B cell (primary cell): ENCODE measurements at regions of chr20 and their contacts with region 1.

Region 1: GRCh38 chr20:24992487-24993205 is at the start of gene APMAP:
- DNase-seq: peak; percentile 97
- ATAC-seq: peak; percentile 91
- H3K4me3 ChIP-seq: peak within 1 kb of the TSS; percentile 73 to 96 (median 84)
- H3K4me3 Mint-ChIP-seq: peak within 1 kb of the TSS; percentile 96
- H3K27ac ChIP-seq: peak within 1 kb of the TSS; percentile 93 to 98
- H3K27ac Mint-ChIP-seq: peak within 1 kb of the TSS; percentile 97
- H3K4me1 ChIP-seq: peaks cover 15 to 29% of the 10 kb centered on the region in 2 donors
- H3K4me1 Mint-ChIP-seq: peaks cover 46% of the 10 kb centered on the region
- H3K27me3 ChIP-seq: no peaks in the 10 kb centered on the region
- H3K27me3 Mint-ChIP-seq: no peaks in the 10 kb centered on the region
- CTCF ChIP-seq: no peak
- total RNA-seq, gene APMAP: 28.0 and 28.2 TPM in 2 replicates

Region 2: GRCh38 chr20:24891546-24892393 is 100.9 kb before region 1 on chr20:
- CTCF ChIA-PET with region 1: no interaction called
- POLR2A ChIA-PET with region 1: no interaction called
- intact Hi-C with region 1: no loop called
- DNase-seq: no peak
- ATAC-seq: no peak
- H3K4me3 ChIP-seq: no peak overlapping the region
- H3K4me3 Mint-ChIP-seq: no peak overlapping the region
- H3K27ac ChIP-seq: no peak overlapping the region
- H3K27ac Mint-ChIP-seq: no peak overlapping the region
- H3K4me1 ChIP-seq: no peaks in the 10 kb centered on the region
- H3K4me1 Mint-ChIP-seq: no peaks in the 10 kb centered on the region
- H3K27me3 ChIP-seq: no peaks in the 10 kb centered on the region
- H3K27me3 Mint-ChIP-seq: peaks cover 4% of the 10 kb centered on the region
- CTCF ChIP-seq: no peak

Region 3: DNA sequence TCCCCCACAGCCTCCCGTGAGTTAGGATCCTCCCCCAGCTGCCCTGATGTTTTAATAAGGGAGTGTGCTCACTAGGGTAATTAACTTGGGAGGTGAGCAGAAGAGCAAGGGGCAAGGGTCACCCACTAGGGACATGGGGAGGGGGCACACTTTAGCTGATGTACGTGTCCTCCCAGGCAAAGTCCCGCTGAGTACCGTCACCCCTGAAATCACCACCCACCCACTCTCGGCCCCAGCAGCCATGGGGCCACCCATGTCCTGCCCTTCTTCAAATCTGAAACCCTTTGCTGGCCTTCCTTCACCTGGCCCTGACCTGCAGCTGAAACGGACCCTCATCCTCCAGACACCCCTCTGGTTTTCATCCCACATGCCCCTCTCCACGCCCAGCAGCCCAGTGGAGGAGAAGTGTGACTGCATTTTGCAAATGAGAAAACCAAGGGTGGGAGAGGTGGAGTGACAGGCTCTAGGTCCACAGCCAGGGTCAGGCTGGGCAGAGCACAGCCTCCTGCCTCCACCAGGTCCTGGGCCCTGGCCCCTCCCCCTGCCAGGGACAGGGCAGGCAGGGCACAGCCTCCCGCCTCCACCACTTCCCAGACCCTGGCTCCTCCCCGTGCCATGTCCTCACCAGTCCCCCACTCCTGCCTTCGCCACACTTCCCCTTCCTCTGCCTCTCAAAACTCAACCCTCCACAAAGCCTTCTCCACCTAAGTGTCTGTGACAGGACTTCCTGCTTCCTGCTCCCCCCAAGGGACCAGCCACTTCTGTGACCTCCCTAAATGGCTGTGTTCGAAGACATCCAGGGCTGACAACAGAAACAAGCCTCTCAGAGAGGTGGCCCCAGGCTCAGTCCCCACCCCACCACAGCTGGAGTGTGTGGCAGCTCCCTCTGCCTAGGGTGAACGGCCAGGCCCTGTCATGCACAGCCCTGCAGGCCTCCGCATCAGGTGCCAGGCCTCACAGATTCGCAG is 50.2 kb after region 1 on chr20:
- CTCF ChIA-PET with region 1: interaction called, 5 read pairs
- POLR2A ChIA-PET with region 1: no interaction called
- intact Hi-C with region 1: loop called (anchors 1 kb)
- DNase-seq: peak; percentile 85
- ATAC-seq: peak; percentile 90
- H3K4me3 ChIP-seq: peak overlapping the region in 4 of 5 experiments; percentile 5 to 25 (median 18)
- H3K4me3 Mint-ChIP-seq: peak overlapping the region; percentile 72
- H3K27ac ChIP-seq: peak overlapping the region; percentile 92 to 93
- H3K27ac Mint-ChIP-seq: peak overlapping the region; percentile 90
- H3K4me1 ChIP-seq: peaks cover 58 to 62% of the 10 kb centered on the region in 2 donors
- H3K4me1 Mint-ChIP-seq: peaks cover 63% of the 10 kb centered on the region
- H3K27me3 ChIP-seq: no peaks in the 10 kb centered on the region
- H3K27me3 Mint-ChIP-seq: no peaks in the 10 kb centered on the region
- CTCF ChIP-seq: no peak

Region 4: GRCh38 chr20:25065625-25066338 is 73.1 kb after region 1 on chr20:
- CTCF ChIA-PET with region 1: interaction called, 250 read pairs
- POLR2A ChIA-PET with region 1: interaction called, 11 read pairs
- intact Hi-C with region 1: loop called (anchors 1 kb)
- DNase-seq: peak; percentile 88
- ATAC-seq: peak; percentile 88
- H3K4me3 ChIP-seq: no peak overlapping the region
- H3K4me3 Mint-ChIP-seq: no peak overlapping the region
- H3K27ac ChIP-seq: no peak overlapping the region
- H3K27ac Mint-ChIP-seq: no peak overlapping the region
- H3K4me1 ChIP-seq: peaks cover 24 to 27% of the 10 kb centered on the region in 2 donors
- H3K4me1 Mint-ChIP-seq: peaks cover 27% of the 10 kb centered on the region
- H3K27me3 ChIP-seq: peaks cover 0 to 12% (median 4%) of the 10 kb centered on the region in 4 experiments
- H3K27me3 Mint-ChIP-seq: peaks cover 14% of the 10 kb centered on the region
- CTCF ChIP-seq: peak; percentile 77

Region 5: DNA sequence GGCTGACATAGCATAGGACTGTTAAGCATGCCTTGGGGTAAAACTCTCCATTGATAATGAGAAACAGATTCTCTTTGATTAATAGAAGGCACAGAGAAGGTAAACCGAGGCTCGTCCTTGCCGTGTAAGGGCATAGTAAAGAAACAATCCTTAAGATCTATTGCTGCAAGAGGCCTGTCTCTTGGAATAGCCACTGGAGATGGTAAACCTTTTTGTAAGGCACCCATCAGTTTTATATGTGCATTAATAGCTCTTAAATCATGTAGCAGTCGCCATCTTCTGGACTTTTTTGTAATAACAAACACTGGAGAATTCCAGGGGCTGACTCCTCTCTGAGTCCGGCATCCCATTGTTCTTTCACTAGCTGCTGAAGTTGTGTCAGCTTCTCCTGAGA is 406.4 kb after region 1 on chr20:
- CTCF ChIA-PET with region 1: interaction called, 24 read pairs
- POLR2A ChIA-PET with region 1: no interaction called
- intact Hi-C with region 1: loop called (anchors 1 kb)
- DNase-seq: peak; percentile 69
- ATAC-seq: peak; percentile 53
- H3K4me3 ChIP-seq: no peak overlapping the region
- H3K4me3 Mint-ChIP-seq: no peak overlapping the region
- H3K27ac ChIP-seq: no peak overlapping the region
- H3K27ac Mint-ChIP-seq: no peak overlapping the region
- H3K4me1 ChIP-seq: no peaks in the 10 kb centered on the region
- H3K4me1 Mint-ChIP-seq: peaks cover 5% of the 10 kb centered on the region
- H3K27me3 ChIP-seq: no peaks in the 10 kb centered on the region
- H3K27me3 Mint-ChIP-seq: peaks cover 11% of the 10 kb centered on the region
- CTCF ChIP-seq: peak; percentile 76